T-cell (primary cell): ENCODE measurements at regions of chr11 and their contacts with region 1.

Region 1: GRCh38 chr11:78188286-78189173 is at the starts of genes KCTD21 and USP35:
- DNase-seq: peak; percentile 74 to 93 (median 87)
- ATAC-seq: peak; percentile 90 to 97 (median 96)
- H3K4me3 ChIP-seq: peak within 1 kb of the TSS; percentile 76 to 81
- H3K4me3 Mint-ChIP-seq: peak within 1 kb of the TSS; percentile 97 to 99 (median 99)
- H3K27ac ChIP-seq: peak within 1 kb of the TSS; percentile 43
- H3K27ac Mint-ChIP-seq: peak within 1 kb of the TSS; percentile 89 to 92
- H3K4me1 ChIP-seq: peaks cover 8 to 45% of the 10 kb centered on the region in 2 experiments
- H3K4me1 Mint-ChIP-seq: peaks cover 55 to 60% (median 55%) of the 10 kb centered on the region in 3 donors
- H3K27me3 ChIP-seq: no peaks in the 10 kb centered on the region
- H3K27me3 Mint-ChIP-seq: no peaks in the 10 kb centered on the region
- total RNA-seq, gene KCTD21: 3.4 to 13.2 (median 9.7) TPM
- total RNA-seq, gene USP35: 14.3 to 18.1 (median 15.4) TPM

Region 2: GRCh38 chr11:78202733-78203167 is 14.2 kb after region 1 on chr11:
- CTCF ChIA-PET with region 1: interaction called, 5 to 16 read pairs
- POLR2A ChIA-PET with region 1: interaction called, 19 to 22 read pairs
- DNase-seq: peak; percentile 27 to 88 (median 61)
- ATAC-seq: peak; percentile 83 to 91 (median 89)
- H3K4me3 ChIP-seq: peak overlapping the region; percentile 35 to 62
- H3K4me3 Mint-ChIP-seq: peak overlapping the region; percentile 73 to 85 (median 84)
- H3K27ac ChIP-seq: peak overlapping the region; percentile 80
- H3K27ac Mint-ChIP-seq: peak overlapping the region; percentile 96 to 97
- H3K4me1 ChIP-seq: peaks cover 36 to 68% of the 10 kb centered on the region in 2 experiments
- H3K4me1 Mint-ChIP-seq: peaks cover 46 to 54% (median 48%) of the 10 kb centered on the region in 3 donors
- H3K27me3 ChIP-seq: no peaks in the 10 kb centered on the region
- H3K27me3 Mint-ChIP-seq: no peaks in the 10 kb centered on the region

Region 3: GRCh38 chr11:78221396-78222315 is 33.1 kb after region 1 on chr11:
- CTCF ChIA-PET with region 1: interaction called in 1 of 2 experiments, 10 read pairs
- POLR2A ChIA-PET with region 1: no interaction called
- DNase-seq: peak in 1 of 35 experiments; percentile 19
- ATAC-seq: no peak
- H3K4me3 ChIP-seq: no peak overlapping the region
- H3K4me3 Mint-ChIP-seq: no peak overlapping the region
- H3K27ac ChIP-seq: no peak overlapping the region
- H3K27ac Mint-ChIP-seq: peak overlapping the region in 1 of 2 donors; percentile 2
- H3K4me1 ChIP-seq: no peaks in the 10 kb centered on the region
- H3K4me1 Mint-ChIP-seq: peaks cover 2 to 41% (median 9%) of the 10 kb centered on the region in 3 donors
- H3K27me3 ChIP-seq: no peaks in the 10 kb centered on the region
- H3K27me3 Mint-ChIP-seq: no peaks in the 10 kb centered on the region

Region 4: DNA sequence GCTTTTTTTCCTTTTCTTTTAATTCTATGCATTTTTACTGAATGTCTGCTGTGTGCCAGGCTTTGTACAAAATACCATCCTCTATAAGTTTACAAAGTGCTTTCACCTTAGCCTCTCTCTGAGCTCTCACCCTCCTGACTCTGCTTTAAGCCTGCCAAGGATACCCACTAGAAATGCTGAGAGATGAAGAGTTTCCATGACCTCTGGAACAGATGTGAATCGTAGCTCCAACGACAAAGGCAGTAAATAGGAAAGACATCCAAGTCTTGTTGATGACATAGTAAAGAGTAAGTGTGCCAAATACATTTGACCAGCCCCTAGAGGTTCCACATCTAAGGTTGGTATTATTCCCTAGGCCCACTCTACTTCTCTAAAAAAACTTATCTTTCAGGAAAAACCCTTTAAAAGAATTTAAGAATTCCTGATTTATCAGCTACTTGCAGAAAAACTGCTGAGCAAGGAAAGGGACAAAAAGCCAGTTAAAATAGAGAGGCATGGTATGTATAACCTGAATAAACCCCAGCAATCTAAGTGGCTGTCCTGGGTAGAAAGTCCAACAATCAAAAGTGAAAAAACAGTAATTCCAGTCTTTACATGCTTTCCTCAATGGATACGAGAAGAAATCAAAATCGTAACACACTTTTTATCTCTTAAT is 183.7 kb after region 1 on chr11:
- CTCF ChIA-PET with region 1: no interaction called
- POLR2A ChIA-PET with region 1: interaction called in 1 of 2 experiments, 11 read pairs
- DNase-seq: no peak
- ATAC-seq: no peak
- H3K4me3 ChIP-seq: no peak overlapping the region
- H3K4me3 Mint-ChIP-seq: no peak overlapping the region
- H3K27ac ChIP-seq: no peak overlapping the region
- H3K27ac Mint-ChIP-seq: no peak overlapping the region
- H3K4me1 ChIP-seq: no peaks in the 10 kb centered on the region
- H3K4me1 Mint-ChIP-seq: no peaks in the 10 kb centered on the region
- H3K27me3 ChIP-seq: no peaks in the 10 kb centered on the region
- H3K27me3 Mint-ChIP-seq: no peaks in the 10 kb centered on the region

Region 5: GRCh38 chr11:78416305-78417178 is 228.0 kb after region 1 on chr11:
- CTCF ChIA-PET with region 1: interaction called in 1 of 2 experiments, 10 read pairs
- POLR2A ChIA-PET with region 1: no interaction called
- DNase-seq: peak; percentile 38 to 80 (median 64)
- ATAC-seq: peak; percentile 62 to 64 (median 62)
- H3K4me3 ChIP-seq: peak overlapping the region; percentile 54 to 64
- H3K4me3 Mint-ChIP-seq: peak overlapping the region; percentile 87 to 94 (median 94)
- H3K27ac ChIP-seq: no peak overlapping the region
- H3K27ac Mint-ChIP-seq: peak overlapping the region; percentile 66 to 86
- H3K4me1 ChIP-seq: peaks cover 5 to 25% of the 10 kb centered on the region in 2 experiments
- H3K4me1 Mint-ChIP-seq: peaks cover 17 to 37% (median 22%) of the 10 kb centered on the region in 3 donors
- H3K27me3 ChIP-seq: peaks cover 0 to 20% of the 10 kb centered on the region in 2 experiments
- H3K27me3 Mint-ChIP-seq: peaks cover 15 to 16% of the 10 kb centered on the region in 2 donors

Region 6: GRCh38 chr11:79727221-79727620 is 1538.7 kb after region 1 on chr11:
- CTCF ChIA-PET with region 1: no interaction called
- POLR2A ChIA-PET with region 1: no interaction called
- DNase-seq: no peak
- ATAC-seq: no peak
- H3K4me3 ChIP-seq: no peak overlapping the region
- H3K4me3 Mint-ChIP-seq: no peak overlapping the region
- H3K27ac ChIP-seq: no peak overlapping the region
- H3K27ac Mint-ChIP-seq: no peak overlapping the region
- H3K4me1 ChIP-seq: no peaks in the 10 kb centered on the region
- H3K4me1 Mint-ChIP-seq: no peaks in the 10 kb centered on the region
- H3K27me3 ChIP-seq: no peaks in the 10 kb centered on the region
- H3K27me3 Mint-ChIP-seq: no peaks in the 10 kb centered on the region